ENCODE measurements at regions of chr1 and their contacts with region 1.

Region 1: GRCh38 chr1:110460253-110461220 is 9.6 kb downstream of the PROK1 start:
- DNase-seq: peak; percentile 74
- H3K4me3 ChIP-seq: no peak overlapping the region
- H3K27ac ChIP-seq: no peak overlapping the region
- H3K4me1 ChIP-seq: no peaks in the 10 kb centered on the region
- H3K27me3 ChIP-seq: no peaks in the 10 kb centered on the region
- CTCF ChIP-seq: peak; percentile 90 to 91
- POLR2A ChIP-seq: no peak

Region 2: DNA sequence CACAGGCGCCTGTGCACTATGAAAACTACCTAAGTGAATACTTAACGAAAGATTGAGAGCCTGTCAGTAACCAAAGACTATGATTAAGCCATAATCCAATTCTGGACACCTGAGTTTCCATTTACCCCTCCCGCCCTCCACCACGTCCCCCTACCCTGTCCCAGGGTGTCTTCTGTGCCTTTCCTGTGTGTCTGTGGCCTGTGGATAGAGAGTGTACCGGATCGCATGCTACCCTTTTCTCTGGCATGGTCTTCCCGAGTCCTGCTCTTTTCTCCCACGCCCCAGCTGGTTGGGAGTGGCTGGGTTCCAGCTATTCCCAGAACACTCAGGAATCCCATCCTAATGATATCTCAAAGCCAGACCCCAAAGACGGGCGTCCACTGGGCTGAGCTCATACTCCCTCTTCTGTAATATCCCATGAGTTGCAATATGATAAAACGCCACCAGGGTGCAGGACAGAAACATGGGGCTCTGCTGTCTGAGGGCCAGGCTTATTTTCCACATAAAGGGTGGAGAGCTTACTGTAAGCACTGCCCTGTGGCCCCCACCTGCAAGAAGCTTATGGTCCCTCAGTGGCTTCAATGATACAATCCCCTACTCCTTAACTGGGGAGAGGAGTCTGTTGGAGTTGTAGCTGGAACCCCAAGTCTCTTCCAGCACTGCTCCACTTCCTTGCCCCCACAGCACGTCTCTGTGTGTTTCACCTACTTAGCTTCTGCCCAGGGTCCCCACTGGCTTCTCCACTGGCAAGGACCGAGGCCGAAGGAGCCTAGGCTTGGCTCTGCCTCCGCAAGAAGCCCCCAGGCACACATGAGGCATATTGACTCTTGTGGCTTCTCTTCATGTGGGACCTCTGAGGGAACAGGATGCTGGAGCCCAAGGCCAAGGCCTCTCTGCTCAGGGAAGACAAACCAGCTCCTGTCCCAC is 372.5 kb before region 1 on chr1:
- CTCF ChIA-PET with region 1: interaction called, 38 read pairs
- POLR2A ChIA-PET with region 1: no interaction called
- dilution Hi-C with region 1: no loop called
- intact Hi-C with region 1: loop called (anchors 1 kb)
- DNase-seq: peak; percentile 53
- H3K4me3 ChIP-seq: no peak overlapping the region
- H3K27ac ChIP-seq: no peak overlapping the region
- H3K4me1 ChIP-seq: peaks cover 6% of the 10 kb centered on the region
- H3K27me3 ChIP-seq: peaks cover 49% of the 10 kb centered on the region in 2 experiments
- CTCF ChIP-seq: peak; percentile 57 to 66
- POLR2A ChIP-seq: no peak

Region 3: GRCh38 chr1:110209715-110210603 is 250.6 kb before region 1 on chr1 and contains the start of gene KCNC4:
- CTCF ChIA-PET with region 1: interaction called, 211 read pairs
- POLR2A ChIA-PET with region 1: no interaction called
- dilution Hi-C with region 1: no loop called
- intact Hi-C with region 1: no loop called
- DNase-seq: peak; percentile 81
- H3K4me3 ChIP-seq: peak within 1 kb of the TSS; percentile 43 to 65 (median 61)
- H3K27ac ChIP-seq: no peak within 1 kb of the TSS
- H3K4me1 ChIP-seq: peaks cover 5% of the 10 kb centered on the region
- H3K27me3 ChIP-seq: peaks cover 0 to 6% of the 10 kb centered on the region in 2 experiments
- CTCF ChIP-seq: no peak
- POLR2A ChIP-seq: no peak
- total RNA-seq, gene KCNC4: 12.3 and 22.5 TPM in 2 replicates

Region 4: DNA sequence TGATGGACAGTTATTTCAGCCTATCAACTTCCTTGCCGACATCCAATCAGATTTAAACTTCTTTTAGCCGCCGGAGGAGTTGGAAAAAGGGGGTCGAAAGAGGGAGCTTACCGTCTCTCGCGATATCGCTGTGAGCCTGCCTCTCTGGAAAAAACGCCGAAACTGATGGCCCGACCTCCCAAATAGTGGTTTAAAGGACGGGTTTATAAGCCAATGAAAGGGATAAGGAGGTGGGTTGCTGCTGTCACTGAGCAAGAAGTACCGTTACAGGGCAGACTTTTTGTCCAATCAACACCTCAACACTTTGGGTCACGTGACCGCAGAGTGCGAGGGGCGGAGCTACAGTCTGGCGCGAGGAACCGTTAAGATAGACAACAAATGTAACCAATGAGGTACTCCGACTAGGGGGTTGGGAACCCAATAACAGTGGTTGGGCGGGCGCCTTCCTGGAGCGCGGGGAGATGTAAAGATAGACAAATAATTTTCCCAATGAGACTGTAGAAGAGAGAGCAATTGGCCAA is 121.6 kb before region 1 on chr1 and contains the start of gene RBM15:
- CTCF ChIA-PET with region 1: interaction called, 21 read pairs
- POLR2A ChIA-PET with region 1: no interaction called
- dilution Hi-C with region 1: no loop called
- intact Hi-C with region 1: loop called (anchors 5 kb)
- DNase-seq: peak; percentile 100
- H3K4me3 ChIP-seq: peak within 1 kb of the TSS; percentile 83 to 91 (median 84)
- H3K27ac ChIP-seq: peak within 1 kb of the TSS; percentile 88
- H3K4me1 ChIP-seq: peaks cover 37% of the 10 kb centered on the region
- H3K27me3 ChIP-seq: no peaks in the 10 kb centered on the region
- CTCF ChIP-seq: no peak
- POLR2A ChIP-seq: no peak
- total RNA-seq, gene RBM15: 26.9 and 29.5 TPM in 2 replicates

Region 5: GRCh38 chr1:110433803-110434202 is 26.7 kb before region 1 on chr1:
- CTCF ChIA-PET with region 1: interaction called, 16 read pairs
- POLR2A ChIA-PET with region 1: no interaction called
- dilution Hi-C with region 1: no loop called
- intact Hi-C with region 1: no loop called
- DNase-seq: no peak
- H3K4me3 ChIP-seq: no peak overlapping the region
- H3K27ac ChIP-seq: no peak overlapping the region
- H3K4me1 ChIP-seq: no peaks in the 10 kb centered on the region
- H3K27me3 ChIP-seq: peaks cover 9 to 16% of the 10 kb centered on the region in 2 experiments
- CTCF ChIP-seq: no peak
- POLR2A ChIP-seq: no peak

Region 6: DNA sequence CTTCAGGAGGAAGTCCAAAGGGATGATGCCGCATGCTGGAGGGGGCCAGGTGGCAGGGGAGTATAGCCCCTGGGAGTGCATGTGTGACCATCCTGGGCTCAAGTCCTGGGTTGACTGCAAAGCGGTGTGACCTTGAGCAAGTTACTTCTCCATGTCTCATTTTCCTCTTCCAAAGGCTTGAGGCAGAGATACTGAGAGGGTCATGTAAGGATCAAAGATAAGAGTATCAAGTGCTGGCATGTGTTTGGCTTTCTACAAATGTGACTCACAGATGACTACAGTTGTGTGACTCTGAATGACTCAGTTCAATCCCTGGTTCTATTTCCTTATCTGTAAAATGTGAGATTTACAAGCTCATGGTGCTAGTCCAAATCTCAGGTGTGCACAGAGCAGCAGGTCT is 16.5 kb after region 1 on chr1:
- CTCF ChIA-PET with region 1: interaction called, 17 read pairs
- POLR2A ChIA-PET with region 1: no interaction called
- dilution Hi-C with region 1: no loop called
- intact Hi-C with region 1: no loop called
- DNase-seq: peak; percentile 62
- H3K4me3 ChIP-seq: no peak overlapping the region
- H3K27ac ChIP-seq: no peak overlapping the region
- H3K4me1 ChIP-seq: peaks cover 13% of the 10 kb centered on the region
- H3K27me3 ChIP-seq: peaks cover 0 to 3% of the 10 kb centered on the region in 2 experiments
- CTCF ChIP-seq: no peak
- POLR2A ChIP-seq: no peak

Measured in endothelial cell of umbilical vein (primary cell).